H1 (cell line): ENCODE measurements at regions of chr5 and their contacts with region 1.

Region 1: DNA sequence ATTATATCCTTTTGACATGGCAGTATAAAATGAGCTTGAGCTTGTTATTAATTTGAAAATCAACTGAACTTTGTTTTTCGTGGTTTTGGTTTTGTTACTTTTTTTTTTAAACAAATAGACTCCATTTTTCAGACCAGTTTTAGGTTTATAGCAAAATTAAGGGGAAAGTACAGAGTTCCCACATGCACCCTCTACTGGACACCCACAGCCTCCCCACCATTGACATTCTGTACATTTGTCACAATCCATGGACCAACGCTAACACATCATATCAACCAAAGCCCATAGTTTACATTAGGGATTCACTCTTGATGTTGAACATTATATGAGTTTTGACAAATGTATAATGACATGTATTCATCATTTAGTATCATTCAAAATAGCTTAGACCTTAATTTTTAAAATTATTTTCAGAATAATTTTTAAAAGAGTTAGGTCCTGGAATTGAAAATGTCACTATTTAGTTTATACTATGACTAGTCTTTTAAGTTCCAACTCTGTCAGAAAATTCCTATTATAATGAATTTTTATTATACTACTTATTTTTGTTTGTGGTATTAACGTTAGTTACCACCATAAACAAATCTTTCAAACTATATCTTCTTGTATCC is 35.3 kb upstream of the JMY start:
- DNase-seq: no peak
- H3K4me3 ChIP-seq: no peak overlapping the region
- H3K27ac ChIP-seq: no peak overlapping the region
- H3K4me1 ChIP-seq: no peaks in the 10 kb centered on the region
- H3K27me3 ChIP-seq: no peaks in the 10 kb centered on the region
- CTCF ChIP-seq: peak in 1 of 3 experiments; percentile 35; a peak in 1 of 4 replicates
- EP300 ChIP-seq: no peak
- POLR2A ChIP-seq: no peak
- RAD21 ChIP-seq: 0 out of 4 replicates have a peak, but pooled peaks of 1 of the 2 experiments have one; percentile 9

Region 2: DNA sequence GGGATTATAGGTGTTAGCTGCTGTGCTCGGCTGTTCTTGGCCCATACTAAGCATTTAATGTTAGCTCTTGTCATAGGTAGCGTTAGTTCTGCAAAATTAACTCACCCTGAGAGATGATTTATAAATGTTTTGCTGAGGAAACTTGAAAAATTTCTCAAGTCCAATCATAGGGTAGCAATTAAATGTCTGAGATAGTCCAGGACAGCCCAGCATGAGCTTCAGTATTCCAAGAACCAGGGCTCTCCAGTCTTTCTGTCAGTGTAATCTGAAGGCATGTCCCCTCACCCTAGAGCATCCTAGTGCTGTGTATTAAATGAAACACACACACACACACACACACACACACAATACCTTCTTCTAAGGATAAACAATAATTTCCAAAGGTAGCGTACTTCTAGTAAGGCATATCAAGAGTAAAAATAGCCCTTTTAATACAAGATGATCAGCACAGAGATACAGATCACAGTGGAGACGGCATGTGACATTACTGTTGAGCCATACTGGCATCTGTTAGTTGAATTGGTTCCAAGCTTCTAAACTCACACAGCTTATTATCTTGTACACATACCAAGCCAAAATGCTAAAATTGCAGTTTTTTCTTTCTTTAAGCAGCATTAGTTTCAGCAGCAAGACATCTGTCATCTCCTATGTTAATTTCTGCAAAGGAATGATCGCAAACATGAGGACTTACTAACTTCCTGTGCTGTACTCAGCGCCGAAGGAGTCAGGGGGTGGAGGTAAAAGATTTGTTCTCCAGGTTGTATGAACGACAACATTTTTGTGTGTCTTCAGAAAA is 11.0 kb before region 1 on chr5:
- CTCF ChIA-PET with region 1: interaction called, 12 read pairs
- POLR2A ChIA-PET with region 1: interaction called, 3 read pairs
- DNase-seq: no peak
- H3K4me3 ChIP-seq: no peak overlapping the region
- H3K27ac ChIP-seq: no peak overlapping the region
- H3K4me1 ChIP-seq: no peaks in the 10 kb centered on the region
- H3K27me3 ChIP-seq: no peaks in the 10 kb centered on the region
- CTCF ChIP-seq: no peak
- EP300 ChIP-seq: no peak
- POLR2A ChIP-seq: no peak
- RAD21 ChIP-seq: no peak

Region 3: GRCh38 chr5:79305706-79306105 is 105.0 kb after region 1 on chr5:
- CTCF ChIA-PET with region 1: no interaction called
- POLR2A ChIA-PET with region 1: no interaction called
- DNase-seq: no peak
- H3K4me3 ChIP-seq: no peak overlapping the region
- H3K27ac ChIP-seq: no peak overlapping the region
- H3K4me1 ChIP-seq: no peaks in the 10 kb centered on the region
- H3K27me3 ChIP-seq: no peaks in the 10 kb centered on the region
- CTCF ChIP-seq: no peak
- EP300 ChIP-seq: no peak
- POLR2A ChIP-seq: no peak
- RAD21 ChIP-seq: no peak